A673 (cell line): ENCODE measurements at regions of chr3 and their contacts with region 1.

Region 1: DNA sequence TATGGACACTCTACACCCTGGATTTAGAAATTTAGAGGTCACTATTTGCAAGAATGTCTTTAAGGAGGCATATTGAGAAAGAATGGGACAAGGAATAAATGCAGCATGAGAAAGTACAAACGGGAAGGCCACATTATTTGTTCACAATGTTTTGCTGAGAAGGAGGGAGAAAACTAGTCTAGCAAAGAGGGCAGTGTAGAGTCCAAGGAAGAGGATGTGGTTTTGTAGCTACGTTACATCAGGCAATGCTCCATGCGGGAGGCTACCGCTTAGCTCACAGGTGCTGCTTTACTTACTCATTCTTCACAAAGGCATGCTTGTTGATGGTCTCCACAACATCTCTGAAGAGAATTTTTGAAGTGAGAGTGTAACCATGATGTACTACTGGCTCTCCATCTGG is 191.1 kb downstream of the PLCH1 start:
- DNase-seq: no peak
- H3K4me3 ChIP-seq: no peak overlapping the region
- H3K27ac ChIP-seq: no peak overlapping the region
- H3K4me1 ChIP-seq: peaks cover 25% of the 10 kb centered on the region
- H3K27me3 ChIP-seq: no peaks in the 10 kb centered on the region
- CTCF ChIP-seq: no peak

Region 2: DNA sequence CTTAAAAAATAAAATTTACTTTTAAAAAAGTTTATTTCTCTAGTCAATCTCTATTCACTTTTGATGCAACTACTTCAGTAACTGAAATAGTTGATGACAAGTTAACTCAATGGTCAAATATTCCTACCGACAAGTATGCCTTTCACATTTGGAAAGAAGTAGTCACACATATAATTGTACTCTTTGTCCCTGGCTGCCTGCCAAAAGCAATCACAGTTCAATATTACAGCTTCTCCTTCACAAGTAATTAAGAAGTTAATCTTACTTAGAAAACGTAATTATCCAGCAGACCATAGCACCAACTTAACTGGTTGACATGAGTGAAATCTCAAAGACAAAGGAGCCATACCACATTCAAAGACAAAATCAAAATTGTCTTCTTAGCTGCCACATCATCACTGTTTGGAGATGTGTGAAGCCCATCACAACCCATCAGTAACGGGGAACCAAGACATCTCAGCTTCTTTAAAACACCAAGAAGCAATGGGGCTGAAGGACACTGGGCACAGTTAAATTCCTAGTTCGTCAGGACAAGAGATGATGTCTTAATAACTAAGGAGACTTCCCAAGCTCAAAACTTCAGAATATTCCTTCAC is 105.0 kb after region 1 on chr3:
- CTCF ChIA-PET with region 1: interaction called, 17 read pairs
- POLR2A ChIA-PET with region 1: no interaction called
- intact Hi-C with region 1: no loop called
- DNase-seq: no peak
- H3K4me3 ChIP-seq: no peak overlapping the region
- H3K27ac ChIP-seq: no peak overlapping the region
- H3K4me1 ChIP-seq: no peaks in the 10 kb centered on the region
- H3K27me3 ChIP-seq: no peaks in the 10 kb centered on the region
- CTCF ChIP-seq: no peak

Region 3: DNA sequence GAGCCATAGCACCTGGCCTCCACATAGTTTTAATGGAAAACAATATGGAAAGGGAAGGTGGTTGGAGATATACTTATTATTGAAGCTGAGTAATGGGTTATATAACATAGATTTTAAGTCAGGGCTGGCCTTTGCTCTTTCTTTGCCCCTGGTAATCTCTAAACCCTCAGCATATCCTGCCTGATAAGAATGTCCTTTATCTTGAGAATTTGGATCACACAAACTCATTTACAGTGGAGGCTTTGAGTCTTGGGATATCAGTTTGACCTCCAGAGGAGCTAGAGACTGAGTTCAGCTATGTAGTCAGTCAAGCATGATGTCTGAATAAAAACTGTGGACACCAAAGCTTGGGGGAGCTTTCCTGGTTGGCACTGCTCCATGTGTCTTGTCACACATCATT is 261.2 kb after region 1 on chr3:
- CTCF ChIA-PET with region 1: no interaction called
- POLR2A ChIA-PET with region 1: no interaction called
- intact Hi-C with region 1: no loop called
- DNase-seq: no peak
- H3K4me3 ChIP-seq: no peak overlapping the region
- H3K27ac ChIP-seq: no peak overlapping the region
- H3K4me1 ChIP-seq: no peaks in the 10 kb centered on the region
- H3K27me3 ChIP-seq: no peaks in the 10 kb centered on the region
- CTCF ChIP-seq: no peak

Region 4: DNA sequence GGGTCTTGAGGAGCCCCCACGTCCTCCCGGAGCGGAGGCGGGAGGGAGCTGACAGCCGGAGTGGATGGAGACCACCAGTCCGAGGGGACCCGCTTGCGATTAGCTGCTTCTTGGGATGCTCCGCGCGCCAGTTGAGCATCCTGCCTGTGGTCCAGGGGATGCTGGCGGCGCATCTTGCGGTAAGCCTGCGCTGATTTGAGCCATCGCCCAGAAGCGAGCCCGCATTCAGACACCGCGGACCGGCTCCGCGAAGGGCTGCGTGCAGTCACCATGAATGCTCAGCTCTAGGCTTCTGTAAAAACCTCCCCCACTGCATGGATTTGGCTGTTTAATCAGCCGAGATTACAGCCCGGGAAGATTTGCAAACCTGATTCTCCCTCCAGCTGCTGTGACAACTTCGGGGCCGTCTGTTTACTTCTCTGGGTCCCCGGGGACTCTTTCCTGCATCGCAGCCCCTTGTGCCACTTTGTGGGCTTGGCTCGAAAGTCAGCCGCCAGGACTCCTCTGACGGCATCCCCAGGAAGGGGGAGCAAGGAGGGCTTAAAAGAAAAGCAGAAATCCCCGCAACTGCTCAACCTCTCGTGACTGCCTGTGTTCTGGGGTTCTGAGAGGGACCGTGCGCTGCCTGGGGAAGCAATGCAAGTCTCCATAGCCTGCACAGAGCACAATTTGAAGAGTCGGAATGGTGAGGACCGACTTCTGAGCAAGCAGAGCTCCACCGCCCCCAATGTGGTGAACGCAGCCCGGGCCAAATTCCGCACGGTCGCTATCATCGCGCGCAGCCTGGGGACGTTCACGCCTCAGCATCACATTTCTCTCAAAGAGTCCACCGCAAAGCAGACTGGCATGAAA is 737.7 kb after region 1 on chr3:
- CTCF ChIA-PET with region 1: no interaction called
- POLR2A ChIA-PET with region 1: no interaction called
- intact Hi-C with region 1: no loop called
- DNase-seq: peak; percentile 27
- H3K4me3 ChIP-seq: peak overlapping the region; percentile 24
- H3K27ac ChIP-seq: no peak overlapping the region
- H3K4me1 ChIP-seq: peaks cover 8% of the 10 kb centered on the region
- H3K27me3 ChIP-seq: peaks cover 48% of the 10 kb centered on the region
- CTCF ChIP-seq: no peak